Lower leg skin (tissue), 4 donors: ENCODE measurements at regions of chr4 and their contacts with region 1.

Region 1: DNA sequence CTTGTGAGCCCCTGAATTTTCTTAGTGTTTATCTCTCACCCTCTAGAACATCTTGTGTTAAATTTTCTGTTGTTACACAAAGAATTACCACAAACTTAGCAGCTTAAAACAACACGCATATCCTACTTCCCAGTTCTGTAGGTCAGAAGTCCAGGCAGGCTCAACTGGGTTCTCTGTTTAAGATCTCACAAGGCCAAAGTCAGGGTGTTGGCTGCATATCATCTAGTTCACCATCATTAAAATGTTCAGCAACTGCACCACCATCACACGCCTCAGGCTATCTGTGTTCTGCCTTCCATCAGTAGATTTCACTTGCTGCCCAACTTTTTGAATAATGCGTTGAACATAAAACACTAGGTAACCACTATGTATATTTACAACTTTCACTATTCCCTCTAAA is 130.5 kb downstream of the PARM1 start:
- DNase-seq: no peak
- H3K4me3 ChIP-seq: no peak overlapping the region
- CTCF ChIP-seq: no peak
- POLR2A ChIP-seq: no peak

Region 2: GRCh38 chr4:74044676-74045075 is 1018.8 kb before region 1 on chr4:
- intact Hi-C with region 1: loop called (anchors 5 kb)
- DNase-seq: no peak
- H3K4me3 ChIP-seq: no peak overlapping the region
- CTCF ChIP-seq: no peak
- POLR2A ChIP-seq: no peak

Region 3: DNA sequence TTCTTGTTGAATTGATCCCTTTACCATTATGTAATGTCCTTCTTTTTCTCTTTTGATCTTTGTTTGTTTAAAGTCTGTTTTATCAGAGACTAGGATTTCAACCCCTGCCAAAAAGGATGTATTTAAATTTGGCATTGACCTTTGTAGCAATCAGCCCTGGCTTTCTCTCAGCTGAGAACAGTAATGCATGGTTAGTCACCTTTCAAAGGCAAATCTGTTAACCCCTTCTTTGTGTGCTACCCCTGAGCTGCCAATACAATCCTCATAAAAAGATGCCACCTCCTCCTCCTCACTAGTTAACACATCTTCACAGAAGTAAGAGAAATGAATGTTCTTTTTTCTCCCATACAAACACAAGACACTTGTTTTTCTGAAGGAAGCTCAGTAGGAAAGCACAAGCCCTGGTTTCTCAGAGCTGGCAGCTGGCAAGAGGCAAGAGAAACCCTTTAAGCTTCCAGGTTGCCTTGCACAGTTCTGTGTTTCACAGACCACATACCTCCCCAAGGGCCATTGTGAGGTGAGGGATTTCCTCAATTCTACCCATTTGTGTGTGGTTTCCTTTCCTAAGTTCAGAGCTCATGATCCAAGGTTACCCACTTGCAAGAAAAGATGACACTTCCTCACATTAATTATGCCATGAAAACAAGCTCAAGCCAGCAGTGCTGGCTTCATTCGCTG is 328.2 kb after region 1 on chr4:
- intact Hi-C with region 1: no loop called
- DNase-seq: no peak
- H3K4me3 ChIP-seq: no peak overlapping the region
- CTCF ChIP-seq: no peak
- POLR2A ChIP-seq: no peak